GM10248 (cell line): ENCODE measurements at regions of chr11 and their contacts with region 1.

Region 1: DNA sequence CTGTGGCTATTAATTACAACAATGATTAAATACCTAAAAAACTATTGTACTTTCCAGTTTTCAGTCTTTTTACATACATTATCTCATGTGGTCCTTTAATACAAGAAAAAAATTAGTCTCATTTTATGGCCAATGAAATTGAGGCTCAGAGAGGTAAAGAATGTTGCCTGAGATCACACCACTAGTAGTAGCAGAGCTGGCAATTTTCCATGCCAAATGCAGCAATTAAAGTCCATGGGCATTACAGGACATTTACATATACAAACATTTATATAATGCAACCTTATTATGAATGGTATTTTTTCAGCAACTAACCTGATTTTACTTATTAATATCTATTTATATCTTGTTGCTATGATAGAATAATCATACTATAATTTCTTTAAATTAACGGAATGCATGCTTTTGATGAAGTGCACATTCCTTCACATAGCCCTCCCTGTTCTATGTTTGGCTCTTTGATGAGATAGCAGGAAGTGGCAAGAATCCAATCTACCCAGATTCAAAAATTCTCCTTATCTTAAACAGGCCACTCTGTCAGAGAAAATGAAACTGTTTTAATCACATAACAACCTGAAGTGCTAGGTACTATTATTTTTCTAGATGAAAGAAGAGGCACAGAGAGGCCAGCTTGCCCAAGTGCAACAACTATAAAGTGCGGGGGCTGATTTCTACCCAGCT is 120.9 kb upstream of the LDLRAD3 start:
- DNase-seq: no peak
- CTCF ChIP-seq: no peak

Region 2: DNA sequence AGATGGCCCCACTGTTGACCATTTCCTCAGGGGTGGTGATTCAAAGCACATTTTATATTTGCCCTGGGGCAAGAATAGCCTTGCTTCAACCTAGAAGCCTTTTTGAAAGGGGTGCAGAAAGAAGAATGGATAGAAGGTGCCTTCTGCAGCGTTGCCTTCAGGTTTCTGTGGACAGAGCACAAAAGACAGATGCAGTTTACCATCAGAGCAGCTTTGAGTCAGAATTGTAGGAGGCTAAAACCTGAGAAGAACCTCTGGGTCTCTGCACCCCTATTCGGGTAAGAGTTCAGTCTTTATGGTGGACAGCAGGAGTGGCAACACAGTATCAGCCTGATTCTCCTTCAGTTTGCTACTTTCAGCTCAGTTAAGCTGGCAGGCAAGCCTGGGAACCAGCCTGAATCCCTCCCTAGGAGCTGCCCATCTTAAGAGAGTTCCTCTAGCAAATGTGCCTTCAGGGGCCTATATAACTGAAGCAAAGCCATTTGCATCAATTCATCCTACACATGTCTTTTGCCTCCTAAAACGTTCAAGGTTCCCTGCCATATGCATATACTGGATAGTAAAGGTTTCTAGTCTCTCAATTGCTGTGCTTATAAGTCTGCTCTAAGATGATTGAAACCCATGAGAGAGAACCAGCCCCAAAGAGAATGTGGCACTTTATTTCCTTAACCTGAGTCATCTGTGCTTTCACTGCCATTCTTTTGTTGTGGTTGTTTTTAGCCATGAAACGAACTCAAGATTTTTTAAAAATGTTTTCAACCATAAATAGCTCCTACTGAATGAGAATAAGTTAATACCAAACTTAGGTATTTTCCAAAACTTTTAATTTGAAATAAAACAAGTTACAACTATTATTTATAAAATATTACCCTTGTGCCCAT is 37.4 kb before region 1 on chr11:
- CTCF ChIA-PET with region 1: interaction called, 20 read pairs
- POLR2A ChIA-PET with region 1: no interaction called
- DNase-seq: peak; percentile 21
- CTCF ChIP-seq: no peak

Region 3: GRCh38 chr11:35811775-35812174 is 11.2 kb before region 1 on chr11:
- CTCF ChIA-PET with region 1: interaction called, 57 read pairs
- POLR2A ChIA-PET with region 1: interaction called, 3 read pairs
- DNase-seq: no peak
- CTCF ChIP-seq: no peak

Region 4: GRCh38 chr11:35888961-35889360 is 66.0 kb after region 1 on chr11:
- CTCF ChIA-PET with region 1: interaction called, 10 read pairs
- POLR2A ChIA-PET with region 1: no interaction called
- DNase-seq: no peak
- CTCF ChIP-seq: no peak

Region 5: DNA sequence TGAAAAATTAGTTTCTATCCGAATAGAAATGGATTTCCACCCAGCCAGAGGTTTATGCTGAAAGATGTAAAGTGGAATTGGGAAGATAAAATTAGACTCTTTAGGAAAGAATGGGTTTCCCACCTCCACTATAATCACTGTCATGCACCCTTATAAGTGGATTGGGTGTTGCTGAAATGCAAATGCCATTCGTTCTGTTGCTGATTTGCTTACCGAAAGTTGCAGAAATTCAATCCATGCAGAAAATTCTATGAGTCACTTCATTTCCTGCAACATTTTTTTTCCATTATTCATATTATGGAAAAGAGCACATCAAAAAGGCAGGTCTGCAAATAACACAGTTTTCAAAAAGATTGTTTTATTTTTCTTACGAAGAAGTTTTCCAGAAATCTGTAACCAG is 186.5 kb after region 1 on chr11:
- CTCF ChIA-PET with region 1: no interaction called
- POLR2A ChIA-PET with region 1: no interaction called
- DNase-seq: no peak
- CTCF ChIP-seq: no peak

Region 6: GRCh38 chr11:36265793-36266628 is 443.1 kb after region 1 on chr11:
- CTCF ChIA-PET with region 1: interaction called, 16 read pairs
- POLR2A ChIA-PET with region 1: no interaction called
- DNase-seq: peak; percentile 73
- CTCF ChIP-seq: peak; percentile 86